Endothelial cell of umbilical vein (primary cell): ENCODE measurements at regions of chr16 and their contacts with region 1.

Region 1: DNA sequence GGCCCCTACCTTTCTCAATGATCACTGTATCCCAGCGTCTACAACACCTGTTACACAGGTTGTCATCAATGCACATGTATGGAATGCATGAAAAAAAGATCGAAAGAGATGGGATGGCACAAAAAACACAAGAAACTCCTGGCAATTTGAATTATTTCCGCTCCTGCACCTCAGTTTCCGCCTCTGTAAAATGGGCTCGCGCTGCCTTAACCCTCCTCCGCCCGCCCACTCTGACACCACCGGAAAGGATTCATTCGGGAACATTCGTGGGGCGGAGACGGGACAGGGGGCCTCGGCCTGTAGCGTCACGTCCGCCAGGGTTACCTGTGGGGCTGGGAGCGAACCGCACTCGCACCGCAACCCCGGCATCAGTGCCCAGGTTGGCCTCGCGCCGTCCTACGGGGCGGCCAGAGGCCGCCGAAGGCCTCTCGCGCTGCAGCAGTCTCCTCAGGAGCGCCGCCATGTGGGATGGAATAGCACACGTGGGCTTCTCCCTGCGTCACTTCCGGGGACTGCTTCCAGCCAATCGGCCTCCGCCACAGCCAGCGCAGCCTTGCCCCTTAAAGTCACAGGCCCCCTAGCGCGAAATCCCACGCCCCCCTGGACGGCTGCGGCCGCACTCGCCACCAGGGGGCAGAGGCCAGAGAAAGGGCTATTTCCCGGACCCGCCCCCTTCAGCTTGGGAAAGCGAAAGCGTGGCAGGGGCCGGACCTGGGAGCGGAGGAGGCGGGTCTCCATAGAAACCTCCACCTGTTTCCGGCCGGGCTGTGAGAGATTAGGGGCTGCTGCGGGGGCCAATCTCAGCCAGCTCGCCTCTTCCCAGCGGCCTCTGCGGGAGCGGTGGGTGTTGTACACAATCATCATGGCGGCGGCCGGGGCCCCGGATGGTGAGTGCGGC is at the starts of genes EARS2 and UBFD1:
- DNase-seq: peak; percentile 100
- H3K4me3 ChIP-seq: peak within 1 kb of the TSS; percentile 74 to 92 (median 86)
- H3K27ac ChIP-seq: peak within 1 kb of the TSS; percentile 74
- H3K4me1 ChIP-seq: peaks cover 12% of the 10 kb centered on the region
- H3K27me3 ChIP-seq: no peaks in the 10 kb centered on the region
- CTCF ChIP-seq: peak; percentile 98 to 100
- POLR2A ChIP-seq: peak; percentile 71
- total RNA-seq, gene EARS2: 10.9 and 14.7 TPM in 2 replicates
- total RNA-seq, gene UBFD1: 64.8 and 69.9 TPM in 2 replicates

Region 2: DNA sequence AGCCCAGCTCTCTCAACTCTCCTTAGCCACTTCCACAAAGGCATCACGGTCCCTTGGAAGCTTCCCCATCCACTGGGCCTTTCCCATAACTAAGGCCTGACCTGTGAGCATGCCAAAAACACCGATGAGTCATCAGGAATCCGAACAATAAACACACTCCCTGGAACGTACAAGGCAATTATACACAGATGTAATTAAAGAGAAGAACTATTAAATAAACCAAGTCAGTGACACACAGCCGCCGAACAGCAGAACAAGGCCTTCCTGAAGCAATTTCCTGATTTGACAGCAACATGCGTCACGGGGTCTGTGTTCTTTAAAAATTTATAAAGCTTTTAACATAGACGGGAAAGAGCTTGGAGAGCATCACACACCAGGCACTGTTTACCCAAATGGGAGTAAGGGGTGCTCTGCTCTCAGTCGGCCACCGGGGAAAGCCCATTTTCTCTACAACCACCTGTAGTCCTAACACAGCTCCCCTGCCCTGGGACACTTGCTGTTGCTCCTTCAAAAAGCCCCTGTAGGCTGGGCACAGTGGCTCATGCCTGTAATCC is 133.6 kb before region 1 on chr16:
- CTCF ChIA-PET with region 1: no interaction called
- POLR2A ChIA-PET with region 1: no interaction called
- dilution Hi-C with region 1: no loop called
- intact Hi-C with region 1: loop called (anchors 1 kb)
- DNase-seq: peak; percentile 100
- H3K4me3 ChIP-seq: no peak overlapping the region
- H3K27ac ChIP-seq: peak overlapping the region; percentile 96
- H3K4me1 ChIP-seq: peaks cover 24% of the 10 kb centered on the region
- H3K27me3 ChIP-seq: no peaks in the 10 kb centered on the region
- CTCF ChIP-seq: no peak
- POLR2A ChIP-seq: no peak

Region 3: GRCh38 chr16:23466066-23466885 is 90.9 kb before region 1 on chr16:
- CTCF ChIA-PET with region 1: no interaction called
- POLR2A ChIA-PET with region 1: no interaction called
- dilution Hi-C with region 1: no loop called
- intact Hi-C with region 1: no loop called
- DNase-seq: peak; percentile 45
- H3K4me3 ChIP-seq: no peak overlapping the region
- H3K27ac ChIP-seq: no peak overlapping the region
- H3K4me1 ChIP-seq: no peaks in the 10 kb centered on the region
- H3K27me3 ChIP-seq: no peaks in the 10 kb centered on the region
- CTCF ChIP-seq: no peak
- POLR2A ChIP-seq: no peak

Region 4: DNA sequence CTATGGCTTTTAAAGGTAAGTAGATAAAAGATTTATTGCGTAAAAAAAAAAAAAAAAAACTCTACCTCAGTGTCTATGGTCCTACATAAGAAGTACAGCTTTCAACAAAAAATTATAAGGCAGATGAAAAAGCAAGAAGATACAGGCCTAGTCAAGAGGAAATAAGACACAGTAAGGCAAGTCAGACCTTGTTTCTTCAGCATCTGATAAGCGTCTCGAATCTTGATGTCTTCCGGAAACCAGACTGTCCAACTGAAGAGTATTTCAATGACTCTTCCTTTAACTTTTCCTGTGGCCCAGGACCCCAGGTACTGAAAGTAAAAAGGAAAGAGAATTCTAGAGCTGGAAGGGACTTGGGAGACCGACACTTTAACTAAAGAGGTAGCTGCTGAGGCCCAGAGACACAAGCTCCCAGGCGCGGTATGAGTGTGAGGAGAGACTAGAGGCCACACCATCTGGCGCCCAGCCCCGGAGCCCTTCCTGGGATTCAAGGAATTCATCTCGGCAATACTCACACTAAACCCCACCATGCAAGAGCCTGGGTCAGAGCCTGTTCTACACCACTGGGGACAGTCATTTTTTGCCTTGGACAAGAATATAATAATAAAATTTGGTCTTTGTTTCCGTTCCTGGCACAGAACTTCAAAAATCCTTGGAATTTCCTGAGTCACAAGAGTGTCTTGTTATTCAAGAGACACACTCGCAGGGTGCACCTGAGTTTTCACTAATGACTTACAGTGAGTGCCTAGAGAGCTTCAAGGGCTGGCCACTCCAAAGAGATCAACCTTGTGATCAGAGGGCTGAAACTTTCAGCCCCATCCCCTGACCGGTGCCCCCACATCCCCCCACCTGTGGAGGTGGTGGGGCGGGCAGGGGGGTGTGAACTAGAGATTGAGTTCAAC is 65.4 kb before region 1 on chr16:
- CTCF ChIA-PET with region 1: interaction called, 6 read pairs
- POLR2A ChIA-PET with region 1: interaction called, 5 read pairs
- dilution Hi-C with region 1: no loop called
- intact Hi-C with region 1: loop called (anchors 1 kb)
- DNase-seq: peak; percentile 39
- H3K4me3 ChIP-seq: no peak overlapping the region
- H3K27ac ChIP-seq: peak overlapping the region; percentile 46
- H3K4me1 ChIP-seq: peaks cover 25% of the 10 kb centered on the region
- H3K27me3 ChIP-seq: no peaks in the 10 kb centered on the region
- CTCF ChIP-seq: no peak
- POLR2A ChIP-seq: no peak

Region 5: DNA sequence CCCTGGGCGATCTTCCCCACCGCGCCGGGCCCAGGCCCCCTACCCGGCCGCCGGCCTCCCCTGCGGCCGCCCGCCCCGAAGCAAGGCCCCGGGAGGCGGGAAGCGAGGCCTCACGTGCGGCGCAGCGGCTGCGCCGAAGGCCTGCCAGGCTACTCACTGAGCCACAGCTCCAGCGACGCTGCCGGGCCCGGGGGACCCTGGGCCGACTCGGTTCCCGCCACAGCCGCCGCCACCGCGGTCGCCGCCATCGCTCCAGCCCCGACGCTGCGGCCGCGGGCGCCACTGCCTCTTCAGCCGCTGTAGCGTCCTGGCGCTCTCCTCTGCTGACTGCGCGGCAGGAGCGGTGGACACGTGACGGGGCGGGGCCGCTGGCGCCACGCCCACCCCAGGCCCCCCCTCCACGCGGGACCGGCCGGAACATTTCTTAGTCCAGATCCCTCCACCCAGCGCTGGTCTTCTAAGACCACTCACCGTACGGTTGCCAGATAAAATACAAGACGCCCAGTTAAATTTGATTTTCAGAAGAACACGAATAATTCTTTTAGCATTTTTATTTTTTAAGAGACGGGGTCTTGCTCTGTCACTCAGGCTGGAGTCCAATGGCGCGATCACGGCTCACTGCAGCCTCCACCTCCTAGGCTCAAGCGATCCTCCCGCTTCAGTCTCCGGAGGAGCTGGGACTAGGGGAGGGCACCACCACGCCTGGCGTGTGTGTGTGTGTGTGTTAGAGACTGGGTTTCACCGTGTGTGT is 46.8 kb before region 1 on chr16 and contains the start of gene GGA2:
- CTCF ChIA-PET with region 1: no interaction called
- POLR2A ChIA-PET with region 1: no interaction called
- dilution Hi-C with region 1: no loop called
- intact Hi-C with region 1: loop called (anchors 1 kb)
- DNase-seq: peak; percentile 91
- H3K4me3 ChIP-seq: peak within 1 kb of the TSS; percentile 10 to 69 (median 60)
- H3K27ac ChIP-seq: peak within 1 kb of the TSS; percentile 27
- H3K4me1 ChIP-seq: peaks cover under 1% of the 10 kb centered on the region
- H3K27me3 ChIP-seq: no peaks in the 10 kb centered on the region
- CTCF ChIP-seq: no peak
- POLR2A ChIP-seq: peak; percentile 88
- total RNA-seq, gene GGA2: 67.5 and 73.1 TPM in 2 replicates

Region 6: DNA sequence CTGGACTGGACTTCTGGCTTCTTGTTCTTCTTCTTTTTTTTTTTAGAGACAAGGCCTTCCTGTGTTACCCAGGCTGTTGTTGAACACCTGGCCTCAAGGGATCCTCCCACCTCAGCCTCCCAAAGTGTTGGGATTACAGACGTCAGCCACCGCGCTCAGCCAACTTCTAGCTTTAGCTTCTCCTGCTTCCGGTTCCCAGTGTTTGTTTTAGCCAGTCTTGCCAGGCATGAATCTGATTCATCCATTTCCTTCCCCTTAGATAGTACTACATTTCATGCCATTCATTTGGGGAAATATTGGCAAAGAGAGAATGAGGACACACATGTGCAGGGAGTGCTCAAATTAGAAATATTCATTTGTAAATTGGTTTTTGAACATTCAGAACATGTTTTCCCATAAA is 51.1 kb after region 1 on chr16:
- CTCF ChIA-PET with region 1: no interaction called
- POLR2A ChIA-PET with region 1: no interaction called
- dilution Hi-C with region 1: no loop called
- intact Hi-C with region 1: loop called (anchors 1 kb)
- DNase-seq: peak; percentile 93
- H3K4me3 ChIP-seq: peak overlapping the region in 1 of 3 experiments; percentile 28
- H3K27ac ChIP-seq: peak overlapping the region; percentile 96
- H3K4me1 ChIP-seq: peaks cover 13% of the 10 kb centered on the region
- H3K27me3 ChIP-seq: no peaks in the 10 kb centered on the region
- CTCF ChIP-seq: no peak
- POLR2A ChIP-seq: peak; percentile 38

Region 7: DNA sequence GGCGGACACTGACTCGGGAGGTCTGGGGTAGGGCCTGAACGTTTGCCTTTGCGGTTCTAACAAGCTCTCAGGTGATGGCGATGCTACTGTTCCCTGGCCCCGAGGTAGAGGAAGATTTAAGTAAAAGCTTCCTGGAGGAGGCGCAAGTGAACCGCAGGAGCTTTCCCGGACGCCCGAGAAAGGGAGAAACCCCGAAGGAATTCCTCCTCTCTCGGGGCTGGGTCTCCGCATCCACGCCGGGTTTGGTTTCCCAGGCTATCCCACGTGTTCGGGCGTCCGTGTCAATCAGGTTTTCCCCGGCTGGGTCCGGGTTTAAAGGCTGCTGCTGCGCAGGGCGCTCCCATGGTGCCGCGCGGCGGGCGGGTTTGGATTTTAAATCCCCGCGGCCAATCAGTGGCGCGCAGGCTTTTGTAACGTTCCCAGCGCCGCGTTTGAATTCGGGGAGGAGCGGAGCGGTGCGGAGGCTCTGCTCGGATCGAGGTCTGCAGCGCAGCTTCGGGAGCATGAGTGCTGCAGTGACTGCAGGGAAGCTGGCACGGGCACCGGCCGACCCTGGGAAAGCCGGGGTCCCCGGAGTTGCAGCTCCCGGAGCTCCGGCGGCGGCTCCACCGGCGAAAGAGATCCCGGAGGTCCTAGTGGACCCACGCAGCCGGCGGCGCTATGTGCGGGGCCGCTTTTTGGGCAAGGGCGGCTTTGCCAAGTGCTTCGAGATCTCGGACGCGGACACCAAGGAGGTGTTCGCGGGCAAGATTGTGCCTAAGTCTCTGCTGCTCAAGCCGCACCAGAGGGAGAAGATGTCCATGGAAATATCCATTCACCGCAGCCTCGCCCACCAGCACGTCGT is 121.5 kb after region 1 on chr16 and contains the start of gene PLK1:
- CTCF ChIA-PET with region 1: interaction called, 3 read pairs
- POLR2A ChIA-PET with region 1: no interaction called
- dilution Hi-C with region 1: no loop called
- intact Hi-C with region 1: loop called (anchors 1 kb)
- DNase-seq: peak; percentile 84
- H3K4me3 ChIP-seq: peak within 1 kb of the TSS; percentile 55 to 77 (median 68)
- H3K27ac ChIP-seq: peak within 1 kb of the TSS; percentile 4
- H3K4me1 ChIP-seq: peaks cover 27% of the 10 kb centered on the region
- H3K27me3 ChIP-seq: no peaks in the 10 kb centered on the region
- CTCF ChIP-seq: peak in 1 of 2 donors; percentile 33
- POLR2A ChIP-seq: no peak
- total RNA-seq, gene PLK1: 100 and 109 TPM in 2 replicates

Region 8: DNA sequence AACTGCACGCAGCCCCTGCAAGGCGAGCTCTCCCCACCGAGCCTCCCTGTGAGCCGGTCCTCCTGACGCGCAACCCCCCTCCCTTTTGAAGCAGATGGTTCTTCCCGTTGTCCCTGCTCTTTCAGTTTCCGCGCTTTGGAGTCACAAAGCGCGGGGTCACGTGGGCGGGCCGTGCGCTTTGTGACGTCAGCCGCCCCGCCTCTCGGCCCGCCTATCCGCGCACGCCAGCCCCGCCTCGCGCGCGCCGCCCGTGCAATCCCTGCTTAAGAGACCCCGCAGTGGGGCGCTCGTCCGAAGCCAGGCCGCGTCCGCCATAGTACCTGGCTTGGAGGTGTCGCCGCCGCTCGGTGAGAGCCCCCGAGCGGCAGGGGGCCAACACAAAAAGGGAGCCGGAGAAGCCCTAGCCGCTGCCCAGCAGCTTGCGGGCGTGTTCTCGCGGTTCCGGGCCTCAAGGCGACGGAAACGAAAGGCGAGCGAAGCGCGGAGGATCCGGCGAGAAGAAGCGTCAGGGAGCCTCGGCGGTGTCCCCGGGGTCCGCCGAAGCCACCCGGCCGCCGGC is 982.2 kb after region 1 on chr16 and contains the start of gene RBBP6:
- CTCF ChIA-PET with region 1: no interaction called
- POLR2A ChIA-PET with region 1: no interaction called
- dilution Hi-C with region 1: no loop called
- intact Hi-C with region 1: loop called (anchors 1 kb)
- DNase-seq: peak; percentile 98
- H3K4me3 ChIP-seq: peak within 1 kb of the TSS; percentile 80 to 94 (median 88)
- H3K27ac ChIP-seq: peak within 1 kb of the TSS; percentile 96
- H3K4me1 ChIP-seq: peaks cover 36% of the 10 kb centered on the region
- H3K27me3 ChIP-seq: no peaks in the 10 kb centered on the region
- CTCF ChIP-seq: peak in 1 of 2 donors; percentile 28
- POLR2A ChIP-seq: peak; percentile 93
- total RNA-seq, gene RBBP6: 49.2 and 52.1 TPM in 2 replicates